ENCODE measurements at regions of chr7 and their contacts with region 1.

Region 1: GRCh38 chr7:150378853-150379440 is at the start of gene ZNF775:
- DNase-seq: peak; percentile 96
- ATAC-seq: peak; percentile 98
- H3K4me3 Mint-ChIP-seq: peak within 1 kb of the TSS; percentile 81
- H3K27ac Mint-ChIP-seq: peak within 1 kb of the TSS; percentile 63
- H3K4me1 Mint-ChIP-seq: peaks cover 53% of the 10 kb centered on the region
- H3K27me3 Mint-ChIP-seq: no peaks in the 10 kb centered on the region
- total RNA-seq, gene ZNF775: 3.9 to 5.1 TPM

Region 2: DNA sequence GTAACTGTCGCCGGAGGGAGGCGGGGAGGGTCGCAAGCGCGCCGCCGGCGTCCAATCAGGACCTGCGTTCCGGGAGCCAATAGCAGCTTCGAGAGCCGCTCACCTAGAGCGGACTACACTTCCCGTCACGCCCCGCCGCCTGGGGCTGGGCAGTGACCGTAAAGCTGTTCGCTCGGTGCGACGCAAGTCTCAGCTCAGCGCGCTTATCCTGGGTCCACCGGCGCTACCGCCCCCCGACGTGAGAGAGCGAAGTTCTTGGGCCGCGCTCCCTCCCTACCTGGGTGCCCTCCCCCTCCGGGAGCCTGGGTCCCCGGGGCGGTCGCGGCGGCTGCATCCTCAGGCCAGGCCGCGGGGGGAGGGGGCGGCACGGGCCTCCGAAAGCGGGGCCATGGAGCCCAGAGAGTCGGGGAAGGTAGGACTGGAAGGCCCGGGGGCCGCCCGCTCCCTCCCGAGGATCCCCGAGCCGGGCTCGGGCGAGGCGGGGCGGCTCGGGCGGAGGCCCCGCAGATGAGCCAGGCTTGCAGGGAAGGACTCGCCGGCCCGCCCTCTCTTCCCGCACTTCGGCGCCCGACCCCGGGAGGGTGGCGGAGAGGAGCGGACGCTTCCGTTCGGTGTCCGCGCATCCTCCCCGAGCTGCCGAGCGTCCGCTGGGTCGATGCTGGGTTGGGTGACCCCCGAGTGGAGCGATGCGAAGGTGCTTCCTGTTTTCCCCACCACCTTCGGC is 540.6 kb before region 1 on chr7 and contains the start of gene ZNF862:
- CTCF ChIA-PET with region 1: no interaction called
- POLR2A ChIA-PET with region 1: no interaction called
- intact Hi-C with region 1: loop called in 1 of 2 experiments (anchors 1 kb)
- DNase-seq: peak; percentile 98
- ATAC-seq: peak; percentile 98
- H3K4me3 Mint-ChIP-seq: peak within 1 kb of the TSS; percentile 78
- H3K27ac Mint-ChIP-seq: peak within 1 kb of the TSS; percentile 74
- H3K4me1 Mint-ChIP-seq: peaks cover 28% of the 10 kb centered on the region
- H3K27me3 Mint-ChIP-seq: no peaks in the 10 kb centered on the region
- total RNA-seq, gene ZNF862: 17.6 to 18.3 TPM

Region 3: DNA sequence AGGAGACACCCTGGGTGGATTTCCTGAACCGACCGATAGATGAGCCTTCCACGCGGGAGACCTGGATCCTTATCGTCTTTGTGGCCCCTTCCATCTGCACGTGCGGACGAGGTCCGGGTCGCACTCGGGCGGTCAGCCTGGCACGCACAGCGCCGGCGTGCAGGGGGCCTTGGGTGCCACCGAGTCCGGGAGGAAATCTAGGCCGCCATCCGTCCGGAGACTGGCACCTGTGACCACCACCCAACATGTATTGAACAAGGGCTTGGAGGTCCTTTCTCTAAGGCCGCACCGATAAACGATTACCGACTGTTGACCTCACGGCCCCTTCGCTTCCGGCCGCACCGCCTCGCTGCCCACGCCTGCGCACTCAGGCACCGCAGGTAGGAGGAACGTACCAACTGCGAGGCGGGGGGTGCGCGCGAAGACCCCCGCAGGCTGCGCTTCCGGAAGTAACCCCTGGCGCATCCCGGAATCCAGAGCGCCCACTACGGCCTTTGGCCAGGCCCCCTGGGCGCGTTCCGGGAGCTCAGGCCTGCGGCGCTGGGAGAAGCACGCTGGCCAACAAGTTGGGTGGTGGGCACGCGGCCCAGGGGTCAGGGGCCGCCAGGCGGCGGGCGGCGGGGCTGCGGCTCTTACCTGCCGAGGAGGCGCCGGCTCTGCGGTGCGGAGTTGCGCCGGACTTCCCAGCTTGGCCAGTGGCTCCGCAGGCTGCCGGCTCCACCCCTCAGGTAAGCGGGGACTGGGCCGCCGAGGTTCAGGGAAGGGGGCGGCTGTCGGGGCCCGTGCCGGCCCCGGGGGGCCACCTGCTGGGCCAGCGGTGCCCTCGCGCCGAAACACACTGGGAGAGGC is 55.9 kb before region 1 on chr7 and contains the starts of genes ACTR3C and LRRC61:
- CTCF ChIA-PET with region 1: interaction called, 3 read pairs
- POLR2A ChIA-PET with region 1: no interaction called
- intact Hi-C with region 1: loop called (anchors 1 to 5 kb)
- DNase-seq: peak; percentile 78
- ATAC-seq: peak; percentile 24
- H3K4me3 Mint-ChIP-seq: peak within 1 kb of the TSS; percentile 91
- H3K27ac Mint-ChIP-seq: peak within 1 kb of the TSS; percentile 99
- H3K4me1 Mint-ChIP-seq: peaks cover 52% of the 10 kb centered on the region
- H3K27me3 Mint-ChIP-seq: no peaks in the 10 kb centered on the region
- total RNA-seq, gene ACTR3C: 3.2 to 4.7 TPM
- total RNA-seq, gene LRRC61: 13.0 to 17.4 TPM

Region 4: DNA sequence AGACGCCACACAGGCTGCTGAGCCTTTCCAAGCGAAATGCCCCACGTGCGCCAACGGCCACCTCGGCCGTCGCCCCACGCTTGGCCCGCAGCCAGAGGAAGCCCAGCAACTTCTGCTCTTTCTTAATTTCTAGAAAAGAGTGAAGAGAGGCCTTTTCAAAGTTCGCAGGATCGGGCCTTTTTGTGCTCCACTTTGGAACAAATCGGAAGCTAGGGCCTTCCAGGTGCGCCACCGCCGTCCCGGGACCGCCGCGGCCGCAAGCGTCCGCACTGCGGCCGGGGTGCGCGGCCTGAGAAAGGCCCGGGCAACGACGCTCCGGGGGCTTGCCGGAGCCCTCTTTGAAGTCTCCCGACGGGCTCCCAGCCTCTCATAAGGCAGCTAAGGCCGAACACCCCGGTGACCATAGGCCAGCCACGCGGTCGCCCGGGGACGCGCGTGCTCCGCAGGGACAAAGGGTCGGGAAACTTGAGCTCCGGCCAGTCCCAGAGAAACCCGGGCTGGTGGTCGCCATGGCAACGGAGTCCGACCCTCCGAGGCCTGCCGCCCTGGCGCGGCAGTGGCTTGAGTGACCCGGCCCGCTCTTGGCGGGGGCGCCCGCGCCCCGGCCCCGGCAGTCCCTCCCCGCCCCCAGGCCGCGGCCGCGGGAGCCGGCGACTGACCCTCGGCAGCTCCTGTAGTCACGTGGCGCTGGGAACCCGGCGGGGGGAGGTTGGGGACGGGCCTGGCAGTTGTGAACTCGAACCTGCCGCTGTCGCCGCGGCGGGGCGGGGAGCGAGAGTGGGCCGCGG is 10.7 kb before region 1 on chr7 and contains the start of gene REPIN1:
- CTCF ChIA-PET with region 1: interaction called, 5 read pairs
- POLR2A ChIA-PET with region 1: interaction called, 5 read pairs
- intact Hi-C with region 1: loop called (anchors 1 kb)
- DNase-seq: peak; percentile 88
- ATAC-seq: peak; percentile 63
- H3K4me3 Mint-ChIP-seq: peak within 1 kb of the TSS; percentile 90
- H3K27ac Mint-ChIP-seq: peak within 1 kb of the TSS; percentile 97
- H3K4me1 Mint-ChIP-seq: peaks cover 37% of the 10 kb centered on the region
- H3K27me3 Mint-ChIP-seq: no peaks in the 10 kb centered on the region
- total RNA-seq, gene REPIN1: 48.2 to 55.6 TPM

Region 5: DNA sequence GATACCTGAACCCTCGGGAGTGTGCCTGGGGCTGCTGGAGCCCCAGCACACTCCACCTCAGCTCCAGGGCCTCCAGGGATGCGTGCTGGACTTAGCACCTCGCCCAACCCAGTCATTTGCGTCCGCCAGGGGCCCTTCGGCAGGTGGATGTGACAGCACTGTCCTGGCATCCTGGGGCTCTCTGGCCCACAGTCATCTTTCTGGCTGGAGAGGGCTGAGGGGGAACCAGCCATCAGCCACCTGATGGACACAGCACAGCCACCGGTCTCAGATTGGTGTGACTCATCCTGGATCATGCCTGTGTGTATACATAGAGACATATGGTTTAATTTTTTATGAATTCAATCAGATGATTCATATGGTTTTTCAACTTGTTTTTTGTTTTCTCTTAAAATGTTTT is 11.3 kb after region 1 on chr7:
- CTCF ChIA-PET with region 1: no interaction called
- POLR2A ChIA-PET with region 1: no interaction called
- intact Hi-C with region 1: no loop called
- DNase-seq: no peak
- ATAC-seq: no peak
- H3K4me3 Mint-ChIP-seq: no peak overlapping the region
- H3K27ac Mint-ChIP-seq: no peak overlapping the region
- H3K4me1 Mint-ChIP-seq: peaks cover 3% of the 10 kb centered on the region
- H3K27me3 Mint-ChIP-seq: no peaks in the 10 kb centered on the region

Region 6: DNA sequence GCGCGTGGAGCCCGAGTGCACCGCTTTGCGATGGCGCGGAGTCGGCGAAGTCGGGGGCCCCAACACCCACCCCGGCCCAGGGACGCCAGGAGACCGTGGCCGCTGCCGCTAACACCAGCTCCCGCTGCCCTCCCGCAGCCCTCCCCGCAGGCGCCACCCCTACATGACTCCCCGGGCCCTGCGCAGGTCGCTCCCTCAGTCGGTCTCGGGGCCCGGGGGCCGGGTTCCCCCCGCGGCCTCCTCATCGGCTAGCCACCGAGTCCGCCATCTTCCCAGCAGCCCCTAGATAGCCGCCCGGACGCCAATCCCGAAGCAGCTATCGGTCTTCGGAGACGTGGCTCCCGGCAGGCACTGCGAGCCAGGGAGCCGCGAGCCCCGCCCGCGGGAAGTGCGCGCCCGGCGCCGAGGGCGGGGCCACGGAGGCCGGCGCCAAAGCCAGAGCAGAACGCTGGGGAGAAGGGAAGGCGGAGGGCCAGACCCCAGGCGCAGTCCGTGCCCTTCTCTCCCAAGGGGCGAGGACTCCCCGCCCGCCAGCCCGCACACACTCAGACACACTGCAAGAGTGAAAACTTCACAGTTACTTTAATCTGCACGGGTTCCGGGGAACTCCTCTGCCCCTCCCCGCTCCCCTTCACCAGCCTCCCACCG is 701.7 kb after region 1 on chr7 and contains the start of gene FASTK:
- CTCF ChIA-PET with region 1: no interaction called
- POLR2A ChIA-PET with region 1: no interaction called
- intact Hi-C with region 1: loop called in 1 of 2 experiments (anchors 5 kb)
- DNase-seq: peak; percentile 94
- ATAC-seq: peak; percentile 89
- H3K4me3 Mint-ChIP-seq: peak within 1 kb of the TSS; percentile 94
- H3K27ac Mint-ChIP-seq: peak within 1 kb of the TSS; percentile 91
- H3K4me1 Mint-ChIP-seq: peaks cover 43% of the 10 kb centered on the region
- H3K27me3 Mint-ChIP-seq: peaks cover 7% of the 10 kb centered on the region
- total RNA-seq, gene FASTK: 56.6 to 56.7 TPM

Region 7: DNA sequence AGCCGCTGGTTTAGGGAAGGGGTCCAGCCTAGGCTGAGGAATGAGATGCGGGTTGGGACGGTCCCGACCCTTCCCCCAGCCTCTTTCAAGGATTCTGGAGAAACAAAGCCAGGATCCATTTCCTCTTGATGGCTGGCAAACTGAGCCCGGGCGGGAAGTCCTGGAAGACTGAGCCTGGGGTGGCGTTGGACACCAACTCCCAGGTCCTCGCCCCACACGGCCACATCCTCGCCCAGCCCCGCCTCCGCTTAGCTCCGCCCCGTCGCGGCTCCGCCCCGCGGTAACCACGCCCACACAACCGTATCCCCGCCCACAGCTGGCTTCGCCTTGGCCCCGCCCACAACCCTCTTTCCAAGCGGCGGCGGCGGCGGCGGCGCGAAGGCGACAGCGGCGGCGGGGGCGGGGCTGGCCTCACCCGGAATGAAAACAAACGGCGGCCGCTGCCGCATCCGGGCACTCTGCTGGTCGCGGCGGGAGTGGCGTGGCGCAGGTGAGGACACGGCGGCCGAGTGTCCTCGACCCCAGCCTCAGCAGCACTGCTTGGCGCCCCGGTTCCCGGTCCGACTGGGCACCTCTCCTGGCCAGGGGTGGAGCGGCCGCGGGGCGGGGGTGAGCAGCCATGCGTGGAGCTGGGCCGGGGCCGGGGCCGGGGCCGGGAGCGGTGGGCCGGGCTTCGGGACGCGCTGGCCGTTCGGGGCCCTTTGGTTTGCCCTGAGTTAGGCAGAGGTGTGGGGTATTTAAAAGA is 962.6 kb after region 1 on chr7 and contains the start of gene NUB1:
- CTCF ChIA-PET with region 1: no interaction called
- POLR2A ChIA-PET with region 1: no interaction called
- intact Hi-C with region 1: loop called in 1 of 2 experiments (anchors 10 kb)
- DNase-seq: peak; percentile 96
- ATAC-seq: peak; percentile 82
- H3K4me3 Mint-ChIP-seq: peak within 1 kb of the TSS; percentile 76
- H3K27ac Mint-ChIP-seq: peak within 1 kb of the TSS; percentile 78
- H3K4me1 Mint-ChIP-seq: peaks cover 46% of the 10 kb centered on the region
- H3K27me3 Mint-ChIP-seq: no peaks in the 10 kb centered on the region
- total RNA-seq, gene NUB1: 51.4 to 70.4 TPM

Measured in activated CD4-positive, alpha-beta T cell treated with anti-CD3 and anti-CD28 coated beads for 36 hours (primary cell).